ENCODE measurements at regions of chr1 and their contacts with region 1.

Region 1: GRCh38 chr1:112715264-112716053 is at the start of gene PPM1J:
- DNase-seq: no peak
- H3K4me3 ChIP-seq: peak within 1 kb of the TSS; percentile 68 to 74
- H3K27ac ChIP-seq: peak within 1 kb of the TSS; percentile 80
- H3K4me1 ChIP-seq: peaks cover 31% of the 10 kb centered on the region
- H3K27me3 ChIP-seq: no peaks in the 10 kb centered on the region
- CTCF ChIP-seq: no peak
- POLR2A ChIP-seq: peak in 1 of 2 donors; percentile 35
- total RNA-seq, gene PPM1J: 7.9 TPM

Region 2: DNA sequence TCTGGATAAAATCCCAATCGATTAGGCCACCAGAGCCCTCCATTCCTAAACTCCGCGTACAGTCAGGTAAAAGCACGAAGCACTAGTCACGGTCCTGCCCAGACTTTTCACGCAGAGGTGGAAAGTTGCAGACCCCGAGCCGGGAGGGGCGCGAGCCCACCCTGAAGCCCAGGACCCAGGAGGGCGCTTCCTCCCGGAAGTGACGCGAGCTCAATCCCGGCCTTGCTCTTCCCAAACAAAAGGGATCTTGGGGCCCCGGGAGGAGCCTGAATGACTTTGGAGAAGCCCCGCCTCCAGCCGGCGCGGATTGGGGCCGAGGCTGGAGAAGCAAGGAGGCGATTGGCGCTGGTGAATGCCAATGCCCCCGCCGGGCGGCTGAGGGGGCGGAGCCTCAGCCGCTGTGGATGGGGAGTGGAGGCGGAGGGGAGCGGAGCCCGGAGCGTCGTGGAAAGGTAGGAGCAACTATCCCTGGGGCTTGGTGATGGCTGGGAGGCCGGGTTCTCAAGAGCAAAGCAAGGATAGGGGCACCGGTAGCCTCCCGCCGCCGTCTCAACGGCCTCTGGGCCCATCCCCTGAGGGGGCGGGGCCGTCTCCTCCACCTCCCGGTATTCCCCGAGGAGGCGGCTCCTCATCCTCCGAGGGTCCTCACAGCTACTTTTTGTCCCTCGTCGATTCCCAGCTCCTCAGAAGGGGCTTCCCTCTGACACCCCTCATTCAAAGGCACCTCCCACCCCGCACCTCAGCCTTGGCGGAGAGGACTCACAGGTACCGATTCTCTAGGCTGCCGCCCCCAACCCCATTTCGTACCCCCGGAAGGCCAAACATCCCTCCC is 319.4 kb before region 1 on chr1 and contains the start of gene CTTNBP2NL:
- intact Hi-C with region 1: loop called (anchors 5 kb)
- DNase-seq: peak in 1 of 2 donors; percentile 97
- H3K4me3 ChIP-seq: peak within 1 kb of the TSS; percentile 87 to 95
- H3K27ac ChIP-seq: peak within 1 kb of the TSS; percentile 96
- H3K4me1 ChIP-seq: peaks cover 87% of the 10 kb centered on the region
- H3K27me3 ChIP-seq: no peaks in the 10 kb centered on the region
- CTCF ChIP-seq: no peak
- POLR2A ChIP-seq: peak in 1 of 2 donors; percentile 31
- total RNA-seq, gene CTTNBP2NL: 24.8 TPM

Region 3: GRCh38 chr1:112674439-112674985 is 40.9 kb before region 1 on chr1 and contains the start of gene MOV10:
- intact Hi-C with region 1: loop called (anchors 5 kb)
- DNase-seq: peak in 1 of 2 donors; percentile 88
- H3K4me3 ChIP-seq: peak within 1 kb of the TSS; percentile 69 to 75
- H3K27ac ChIP-seq: peak within 1 kb of the TSS; percentile 93
- H3K4me1 ChIP-seq: peaks cover 30% of the 10 kb centered on the region
- H3K27me3 ChIP-seq: no peaks in the 10 kb centered on the region
- CTCF ChIP-seq: no peak
- POLR2A ChIP-seq: no peak
- total RNA-seq, gene MOV10: 53.0 TPM

Region 4: DNA sequence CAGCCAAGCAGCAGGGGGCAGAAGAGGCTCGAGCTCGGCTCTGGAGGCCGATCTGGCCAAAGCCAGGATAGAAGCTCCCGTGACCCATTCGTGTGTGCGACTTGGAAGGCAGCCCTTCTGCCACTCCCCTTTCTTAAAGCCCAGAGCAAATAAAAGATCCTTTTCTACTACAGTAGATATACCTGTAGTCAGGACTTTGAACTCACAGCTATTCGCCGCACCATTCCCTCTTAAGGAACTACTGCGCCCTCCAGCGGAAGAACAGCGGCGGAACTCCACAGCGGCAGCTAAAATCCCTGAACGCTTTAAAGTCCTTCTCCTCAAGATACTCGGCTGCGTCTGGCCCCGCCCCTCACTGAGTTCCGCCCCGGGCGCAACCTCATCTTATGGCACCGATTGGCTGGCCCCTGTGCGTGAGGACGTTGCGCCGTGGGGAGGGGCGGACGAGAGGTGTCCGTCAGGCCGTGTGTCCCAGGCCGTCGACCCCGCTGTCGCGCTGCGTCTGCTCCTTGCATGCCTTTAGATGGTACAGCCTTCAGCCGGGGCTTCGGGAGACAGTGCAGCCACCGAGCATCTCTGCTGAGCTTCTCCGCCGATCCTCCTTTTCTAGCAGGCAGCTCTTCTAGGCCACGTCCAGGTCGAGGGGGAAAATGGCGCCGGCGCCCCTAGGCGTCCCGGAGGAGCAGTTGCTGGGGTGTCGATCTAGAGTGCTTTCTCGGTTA is 357.5 kb after region 1 on chr1 and contains the start of gene LRIG2:
- intact Hi-C with region 1: loop called (anchors 10 kb)
- DNase-seq: peak in 1 of 2 donors; percentile 97
- H3K4me3 ChIP-seq: peak within 1 kb of the TSS; percentile 78 to 96
- H3K27ac ChIP-seq: peak within 1 kb of the TSS; percentile 91
- H3K4me1 ChIP-seq: peaks cover 34% of the 10 kb centered on the region
- H3K27me3 ChIP-seq: no peaks in the 10 kb centered on the region
- CTCF ChIP-seq: peak; percentile 78 to 93 (median 93)
- POLR2A ChIP-seq: peak in 1 of 2 donors; percentile 83
- total RNA-seq, gene LRIG2: 43.0 TPM

Measured in vagina (tissue), 2 donors.